CD8-positive, alpha-beta T cell (primary cell): ENCODE measurements at regions of chr11 and their contacts with region 1.

Region 1: GRCh38 chr11:117704395-117705100 is 92.5 kb downstream of the DSCAML1 start:
- DNase-seq: no peak
- ATAC-seq: no peak
- H3K4me3 ChIP-seq: no peak overlapping the region
- H3K4me3 Mint-ChIP-seq: no peak overlapping the region
- H3K27ac ChIP-seq: no peak overlapping the region
- H3K27ac Mint-ChIP-seq: no peak overlapping the region
- H3K4me1 ChIP-seq: no peaks in the 10 kb centered on the region
- H3K4me1 Mint-ChIP-seq: peaks cover 6% of the 10 kb centered on the region
- H3K27me3 ChIP-seq: no peaks in the 10 kb centered on the region
- H3K27me3 Mint-ChIP-seq: peaks cover 7% of the 10 kb centered on the region
- CTCF ChIP-seq: no peak

Region 2: GRCh38 chr11:117678658-117679406 is 25.7 kb before region 1 on chr11:
- CTCF ChIA-PET with region 1: no interaction called
- POLR2A ChIA-PET with region 1: no interaction called
- intact Hi-C with region 1: loop called in 1 of 2 experiments (anchors 1 kb)
- DNase-seq: no peak
- ATAC-seq: no peak
- H3K4me3 ChIP-seq: no peak overlapping the region
- H3K4me3 Mint-ChIP-seq: no peak overlapping the region
- H3K27ac ChIP-seq: no peak overlapping the region
- H3K27ac Mint-ChIP-seq: no peak overlapping the region
- H3K4me1 ChIP-seq: no peaks in the 10 kb centered on the region
- H3K4me1 Mint-ChIP-seq: peaks cover 2% of the 10 kb centered on the region
- H3K27me3 ChIP-seq: no peaks in the 10 kb centered on the region
- H3K27me3 Mint-ChIP-seq: peaks cover 4% of the 10 kb centered on the region
- CTCF ChIP-seq: no peak